ENCODE measurements at regions of chr17 and their contacts with region 1.

Region 1: GRCh38 chr17:40317880-40318829 is 9.2 kb downstream of the RARA start:
- DNase-seq: peak; percentile 81 to 95 (median 90)
- ATAC-seq: peak; percentile 61
- H3K4me3 ChIP-seq: peak overlapping the region; percentile 96
- H3K4me3 Mint-ChIP-seq: peak overlapping the region; percentile 95
- H3K27ac ChIP-seq: peak overlapping the region; percentile 99
- H3K27ac Mint-ChIP-seq: peak overlapping the region; percentile 99
- H3K4me1 ChIP-seq: peaks cover 85% of the 10 kb centered on the region
- H3K4me1 Mint-ChIP-seq: peaks cover 84% of the 10 kb centered on the region
- H3K27me3 ChIP-seq: no peaks in the 10 kb centered on the region
- H3K27me3 Mint-ChIP-seq: no peaks in the 10 kb centered on the region
- CTCF ChIP-seq: no peak

Region 2: GRCh38 chr17:40303009-40303657 is 15.0 kb before region 1 on chr17:
- CTCF ChIA-PET with region 1: interaction called, 21 read pairs
- POLR2A ChIA-PET with region 1: interaction called, 34 read pairs
- intact Hi-C with region 1: loop called (anchors 2 kb)
- DNase-seq: peak in 8 of 14 experiments; percentile 46 to 83 (median 61)
- ATAC-seq: peak; percentile 67
- H3K4me3 ChIP-seq: no peak overlapping the region
- H3K4me3 Mint-ChIP-seq: no peak overlapping the region
- H3K27ac ChIP-seq: no peak overlapping the region
- H3K27ac Mint-ChIP-seq: no peak overlapping the region
- H3K4me1 ChIP-seq: peaks cover 33% of the 10 kb centered on the region
- H3K4me1 Mint-ChIP-seq: peaks cover 16% of the 10 kb centered on the region
- H3K27me3 ChIP-seq: no peaks in the 10 kb centered on the region
- H3K27me3 Mint-ChIP-seq: no peaks in the 10 kb centered on the region
- CTCF ChIP-seq: peak; percentile 93

Region 3: GRCh38 chr17:40340880-40341807 is 23.0 kb after region 1 on chr17:
- CTCF ChIA-PET with region 1: interaction called, 27 read pairs
- POLR2A ChIA-PET with region 1: interaction called, 117 read pairs
- intact Hi-C with region 1: loop called (anchors 1 kb)
- DNase-seq: peak; percentile 76 to 96 (median 85)
- ATAC-seq: peak; percentile 78
- H3K4me3 ChIP-seq: peak overlapping the region; percentile 72
- H3K4me3 Mint-ChIP-seq: peak overlapping the region; percentile 83
- H3K27ac ChIP-seq: peak overlapping the region; percentile 73 to 90
- H3K27ac Mint-ChIP-seq: peak overlapping the region; percentile 93
- H3K4me1 ChIP-seq: peaks cover 89% of the 10 kb centered on the region
- H3K4me1 Mint-ChIP-seq: peaks cover 76% of the 10 kb centered on the region
- H3K27me3 ChIP-seq: no peaks in the 10 kb centered on the region
- H3K27me3 Mint-ChIP-seq: no peaks in the 10 kb centered on the region
- CTCF ChIP-seq: peak; percentile 55

Region 4: DNA sequence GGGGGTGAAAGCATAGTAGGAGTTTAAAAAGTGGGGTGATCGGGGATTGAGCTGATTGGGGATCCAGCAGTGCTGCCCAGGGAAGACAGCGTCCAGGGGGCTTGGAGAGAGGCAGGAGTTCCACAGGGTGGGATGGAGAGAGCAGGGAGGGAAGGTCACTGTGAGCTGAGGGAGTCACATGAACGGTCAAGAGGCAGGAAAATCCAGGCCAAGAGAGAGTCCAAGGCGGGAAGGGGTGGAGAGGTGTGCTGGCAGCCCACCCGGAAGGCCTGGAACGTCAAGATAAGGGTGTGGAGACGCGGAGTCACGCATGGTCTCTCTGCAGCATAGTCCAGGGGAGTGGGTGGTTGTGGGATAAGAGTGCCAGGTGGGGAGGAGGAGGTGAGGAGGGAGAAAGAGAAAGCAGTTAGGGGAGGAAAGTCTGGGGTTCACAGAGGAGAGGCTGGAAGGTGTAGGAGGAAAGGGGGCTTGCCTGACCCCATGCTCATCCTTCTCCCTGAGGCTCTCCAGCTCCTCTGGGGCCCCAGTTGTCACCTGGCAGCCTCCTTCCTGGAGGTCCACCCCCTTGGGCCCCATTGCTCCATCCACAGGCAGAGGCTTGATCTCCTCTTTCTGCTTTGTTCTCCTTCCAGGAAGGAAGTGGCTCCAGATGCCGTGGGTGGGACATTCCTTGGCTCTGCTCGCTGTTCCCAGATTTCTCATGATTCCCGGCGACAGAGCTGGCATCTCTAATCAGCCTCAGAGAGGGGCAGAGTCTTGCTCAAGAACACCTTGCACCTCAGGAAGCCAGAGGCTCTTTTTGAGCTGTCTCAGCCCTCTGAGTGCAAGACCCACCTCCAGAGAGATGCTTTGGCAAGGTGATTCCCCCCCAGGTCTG is 218.4 kb after region 1 on chr17:
- CTCF ChIA-PET with region 1: interaction called, 6 read pairs
- POLR2A ChIA-PET with region 1: interaction called, 11 read pairs
- intact Hi-C with region 1: loop called in 1 of 2 experiments (anchors 5 kb)
- DNase-seq: peak in 1 of 14 experiments; percentile 2
- ATAC-seq: no peak
- H3K4me3 ChIP-seq: no peak overlapping the region
- H3K4me3 Mint-ChIP-seq: no peak overlapping the region
- H3K27ac ChIP-seq: no peak overlapping the region
- H3K27ac Mint-ChIP-seq: peak overlapping the region; percentile 98
- H3K4me1 ChIP-seq: peaks cover 88% of the 10 kb centered on the region
- H3K4me1 Mint-ChIP-seq: peaks cover 94% of the 10 kb centered on the region
- H3K27me3 ChIP-seq: no peaks in the 10 kb centered on the region
- H3K27me3 Mint-ChIP-seq: peaks cover 5% of the 10 kb centered on the region
- CTCF ChIP-seq: no peak

Region 5: GRCh38 chr17:40993839-40994238 is 675.7 kb after region 1 on chr17 and contains the start of gene KRTAP3-3:
- CTCF ChIA-PET with region 1: no interaction called
- POLR2A ChIA-PET with region 1: no interaction called
- intact Hi-C with region 1: no loop called
- DNase-seq: no peak
- ATAC-seq: no peak
- H3K4me3 ChIP-seq: no peak within 1 kb of the TSS
- H3K4me3 Mint-ChIP-seq: no peak within 1 kb of the TSS
- H3K27ac ChIP-seq: no peak within 1 kb of the TSS
- H3K27ac Mint-ChIP-seq: no peak within 1 kb of the TSS
- H3K4me1 ChIP-seq: no peaks in the 10 kb centered on the region
- H3K4me1 Mint-ChIP-seq: no peaks in the 10 kb centered on the region
- H3K27me3 ChIP-seq: peaks cover 12 to 34% of the 10 kb centered on the region in 2 experiments
- H3K27me3 Mint-ChIP-seq: peaks cover 64% of the 10 kb centered on the region
- CTCF ChIP-seq: no peak
- total RNA-seq, gene KRTAP3-3: not detected

Measured in CD4-positive, alpha-beta T cell (primary cell).